PC-9 (cell line): ENCODE measurements at regions of chrX and their contacts with region 1.

Region 1: DNA sequence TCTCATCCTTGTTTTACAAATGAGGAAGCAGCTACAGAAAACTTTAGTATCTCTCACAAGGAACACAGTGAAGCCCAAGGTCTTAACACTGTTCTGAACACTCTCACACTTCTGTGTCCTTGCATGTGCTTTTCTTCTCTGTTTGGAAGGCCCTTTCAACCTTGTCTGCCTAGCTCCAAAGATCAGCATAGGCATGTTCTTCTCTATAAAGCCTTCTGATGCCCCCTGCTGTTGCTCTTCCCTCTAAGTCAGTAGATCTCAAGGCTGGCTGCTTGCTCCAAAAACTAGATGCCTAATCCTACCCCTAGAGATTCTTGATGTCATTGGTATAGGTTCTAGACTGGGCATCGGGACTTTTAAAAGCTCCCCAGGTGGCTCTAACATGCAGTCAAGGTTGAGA is 5.9 kb downstream of the APOO start:
- DNase-seq: peak; percentile 22 to 60
- H3K4me3 ChIP-seq: no peak overlapping the region
- H3K27ac ChIP-seq: peak overlapping the region; percentile 91
- H3K4me1 ChIP-seq: peaks cover 52% of the 10 kb centered on the region
- H3K27me3 ChIP-seq: no peaks in the 10 kb centered on the region
- CTCF ChIP-seq: peak; percentile 50

Region 2: DNA sequence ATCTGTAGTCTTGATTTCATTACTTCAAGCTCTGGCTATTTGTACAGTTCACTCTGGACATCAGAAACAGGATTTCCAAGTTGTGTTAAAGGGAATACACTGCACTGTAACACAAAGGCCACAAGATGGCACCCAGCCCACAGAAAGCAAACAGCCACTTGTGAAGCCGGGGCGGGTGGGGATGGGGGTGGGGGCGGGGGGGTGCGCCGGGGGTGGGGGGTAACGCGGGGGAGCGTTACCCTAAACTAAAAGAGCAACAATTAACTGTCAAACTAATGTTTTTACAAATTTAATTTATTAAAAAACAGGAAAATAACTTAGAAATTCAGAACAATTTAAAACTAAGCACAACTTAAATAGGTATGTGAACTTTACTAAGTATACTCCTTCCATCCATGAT is 207.2 kb before region 1 on chrX:
- CTCF ChIA-PET with region 1: interaction called, 10 read pairs
- POLR2A ChIA-PET with region 1: no interaction called
- intact Hi-C with region 1: loop called (anchors 1 kb)
- DNase-seq: peak; percentile 38 to 43
- H3K4me3 ChIP-seq: no peak overlapping the region
- H3K27ac ChIP-seq: no peak overlapping the region
- H3K4me1 ChIP-seq: no peaks in the 10 kb centered on the region
- H3K27me3 ChIP-seq: no peaks in the 10 kb centered on the region
- CTCF ChIP-seq: peak; percentile 49

Region 3: DNA sequence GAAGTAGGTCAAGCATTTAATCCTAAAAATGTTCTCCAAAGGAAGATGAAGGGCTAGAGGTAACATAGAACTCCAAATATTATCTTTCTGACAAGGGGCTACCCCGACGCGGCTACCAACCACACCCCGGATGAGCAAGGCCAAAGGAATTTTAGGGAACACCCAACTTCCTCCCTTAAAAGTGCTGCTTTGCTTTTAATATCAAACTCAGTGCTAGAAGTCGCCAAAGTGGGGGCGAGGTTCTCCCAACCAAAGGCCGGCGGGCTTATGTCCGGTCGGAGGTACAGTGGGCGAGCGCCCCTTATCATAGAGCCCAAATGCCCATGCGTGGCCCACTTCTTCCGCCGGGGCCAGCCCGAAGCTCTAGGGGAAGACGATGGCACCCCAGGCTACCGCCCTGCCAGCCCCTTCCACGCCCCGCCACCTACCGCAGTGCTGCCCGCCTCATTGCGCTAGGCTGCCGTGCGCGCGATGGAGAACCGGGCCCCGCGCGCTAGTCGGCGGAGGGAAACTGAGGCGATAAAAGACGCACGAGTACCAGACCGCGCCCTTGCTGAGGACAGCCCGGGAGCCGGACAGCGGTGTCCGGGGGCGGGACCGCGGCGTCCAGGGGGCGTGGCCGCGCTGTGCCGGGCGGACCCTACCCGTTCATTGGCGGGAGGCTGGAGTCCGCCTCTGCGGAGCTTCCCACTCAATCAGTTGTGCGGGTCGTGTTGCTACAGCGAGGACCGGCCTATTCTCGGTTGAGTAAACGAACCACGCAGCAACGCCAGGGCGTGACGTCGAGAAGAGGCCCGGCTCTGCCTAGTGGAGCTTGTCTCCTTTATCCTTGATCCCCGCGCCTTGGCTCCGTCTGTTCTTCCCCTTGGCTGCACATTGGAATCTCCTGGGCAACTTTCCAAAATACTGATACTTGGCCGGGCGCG is 158.8 kb before region 1 on chrX and contains the start of gene ACOT9:
- CTCF ChIA-PET with region 1: interaction called, 3 read pairs
- POLR2A ChIA-PET with region 1: interaction called, 6 read pairs
- intact Hi-C with region 1: loop called (anchors 1 kb)
- DNase-seq: peak; percentile 93
- H3K4me3 ChIP-seq: peak within 1 kb of the TSS; percentile 84
- H3K27ac ChIP-seq: peak within 1 kb of the TSS; percentile 97
- H3K4me1 ChIP-seq: peaks cover 10% of the 10 kb centered on the region; the same call in 1 of the 2 replicates
- H3K27me3 ChIP-seq: no peaks in the 10 kb centered on the region
- CTCF ChIP-seq: no peak
- total RNA-seq, gene ACOT9: 40.6 and 47.0 TPM in 2 replicates

Region 4: GRCh38 chrX:23756157-23756559 is 145.6 kb before region 1 on chrX:
- CTCF ChIA-PET with region 1: no interaction called
- POLR2A ChIA-PET with region 1: interaction called, 10 read pairs
- intact Hi-C with region 1: loop called (anchors 1 kb)
- DNase-seq: peak in 1 of 2 experiments; percentile 40
- H3K4me3 ChIP-seq: no peak overlapping the region
- H3K27ac ChIP-seq: no peak overlapping the region
- H3K4me1 ChIP-seq: peaks cover 6% of the 10 kb centered on the region; the same call in 1 of the 2 replicates
- H3K27me3 ChIP-seq: no peaks in the 10 kb centered on the region
- CTCF ChIP-seq: peak; percentile 81

Region 5: GRCh38 chrX:23815401-23815800 is 86.4 kb before region 1 on chrX:
- CTCF ChIA-PET with region 1: no interaction called
- POLR2A ChIA-PET with region 1: no interaction called
- intact Hi-C with region 1: no loop called
- DNase-seq: no peak
- H3K4me3 ChIP-seq: no peak overlapping the region
- H3K27ac ChIP-seq: no peak overlapping the region
- H3K4me1 ChIP-seq: peaks cover 4% of the 10 kb centered on the region; the same call in 1 of the 2 replicates
- H3K27me3 ChIP-seq: no peaks in the 10 kb centered on the region
- CTCF ChIP-seq: no peak

Region 6: DNA sequence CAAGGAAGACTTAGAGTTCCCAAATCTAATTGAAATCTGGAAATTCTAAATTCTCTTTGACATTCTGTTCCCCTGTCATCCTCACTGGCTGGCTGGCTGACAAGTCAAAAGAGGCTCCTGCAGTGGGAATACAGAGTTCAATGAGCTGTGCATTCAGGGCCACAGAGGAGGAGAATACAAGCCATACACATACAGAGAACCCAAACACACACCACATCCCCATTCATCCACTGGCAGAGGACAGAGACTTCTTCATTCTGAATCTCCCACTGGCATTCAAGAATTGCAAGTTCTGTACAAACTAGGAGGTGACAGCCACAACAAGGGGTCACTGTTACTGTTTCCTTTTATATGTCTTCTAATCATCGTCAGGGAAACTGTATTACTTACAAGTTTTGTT is 69.1 kb before region 1 on chrX:
- CTCF ChIA-PET with region 1: no interaction called
- POLR2A ChIA-PET with region 1: no interaction called
- intact Hi-C with region 1: no loop called
- DNase-seq: no peak
- H3K4me3 ChIP-seq: no peak overlapping the region
- H3K27ac ChIP-seq: no peak overlapping the region
- H3K4me1 ChIP-seq: no peaks in the 10 kb centered on the region
- H3K27me3 ChIP-seq: no peaks in the 10 kb centered on the region
- CTCF ChIP-seq: no peak

Region 7: GRCh38 chrX:24024819-24025740 is 123.3 kb after region 1 on chrX:
- CTCF ChIA-PET with region 1: interaction called, 11 read pairs
- POLR2A ChIA-PET with region 1: interaction called, 5 read pairs
- intact Hi-C with region 1: no loop called
- DNase-seq: peak; percentile 68 to 92
- H3K4me3 ChIP-seq: peak overlapping the region; percentile 97
- H3K27ac ChIP-seq: peak overlapping the region; percentile 96
- H3K4me1 ChIP-seq: peaks cover 10% of the 10 kb centered on the region; the same call in 1 of the 2 replicates
- H3K27me3 ChIP-seq: no peaks in the 10 kb centered on the region
- CTCF ChIP-seq: no peak